Activated CD4-positive, alpha-beta memory T cell treated with anti-CD3 and anti-CD28 coated beads for 36 hours (primary cell): ENCODE measurements at regions of chr5 and their contacts with region 1.

Region 1: GRCh38 chr5:74903165-74903787 is 37.1 kb upstream of the FAM169A start:
- DNase-seq: peak; percentile 43
- H3K4me3 Mint-ChIP-seq: no peak overlapping the region
- H3K27ac Mint-ChIP-seq: no peak overlapping the region
- H3K4me1 Mint-ChIP-seq: no peaks in the 10 kb centered on the region
- H3K27me3 Mint-ChIP-seq: no peaks in the 10 kb centered on the region

Region 2: DNA sequence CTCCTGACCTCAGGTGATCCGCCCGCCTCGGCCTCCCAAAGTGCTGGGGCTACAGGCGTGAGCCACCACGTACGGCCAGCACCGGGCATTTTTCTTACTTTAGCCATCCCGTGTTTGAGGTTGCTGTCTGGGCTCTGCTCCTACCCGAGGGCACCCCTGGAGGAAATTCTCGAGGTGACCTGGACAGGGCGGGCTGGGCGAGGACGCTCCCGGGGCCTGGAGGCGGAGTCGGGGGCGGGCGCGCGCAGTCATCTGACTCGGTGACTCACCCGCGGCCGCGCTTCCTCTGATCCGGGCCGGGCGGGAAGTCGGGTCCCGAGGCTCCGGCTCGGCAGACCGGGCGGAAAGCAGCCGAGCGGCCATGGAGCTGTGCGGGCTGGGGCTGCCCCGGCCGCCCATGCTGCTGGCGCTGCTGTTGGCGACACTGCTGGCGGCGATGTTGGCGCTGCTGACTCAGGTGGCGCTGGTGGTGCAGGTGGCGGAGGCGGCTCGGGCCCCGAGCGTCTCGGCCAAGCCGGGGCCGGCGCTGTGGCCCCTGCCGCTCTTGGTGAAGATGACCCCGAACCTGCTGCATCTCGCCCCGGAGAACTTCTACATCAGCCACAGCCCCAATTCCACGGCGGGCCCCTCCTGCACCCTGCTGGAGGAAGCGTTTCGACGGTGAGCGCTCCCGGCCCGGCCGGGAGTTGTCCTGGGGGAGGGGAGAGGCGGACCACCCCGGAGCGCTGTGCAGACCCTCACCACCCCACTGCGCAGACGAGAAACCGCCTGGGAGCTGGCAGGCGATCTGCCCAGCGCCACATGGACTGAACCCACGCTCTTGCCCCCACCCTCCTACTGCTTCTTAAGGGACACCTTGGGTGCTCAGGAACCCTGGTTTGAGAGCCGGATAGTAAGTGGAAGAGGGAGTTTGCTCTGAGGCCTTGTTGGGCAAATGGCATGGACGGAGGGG is 218.1 kb before region 1 on chr5 and contains the start of gene HEXB:
- CTCF ChIA-PET with region 1: no interaction called
- POLR2A ChIA-PET with region 1: no interaction called
- intact Hi-C with region 1: loop called (anchors 1 kb)
- DNase-seq: peak; percentile 92
- H3K4me3 Mint-ChIP-seq: peak within 1 kb of the TSS; percentile 79
- H3K27ac Mint-ChIP-seq: peak within 1 kb of the TSS; percentile 49
- H3K4me1 Mint-ChIP-seq: peaks cover 21% of the 10 kb centered on the region
- H3K27me3 Mint-ChIP-seq: no peaks in the 10 kb centered on the region
- total RNA-seq, gene HEXB: 67.1 to 68.5 TPM